T-cell (primary cell): ENCODE measurements at regions of chr3 and their contacts with region 1.

Region 1: GRCh38 chr3:71202848-71203533 is 380.5 kb downstream of the FOXP1 start:
- DNase-seq: no peak
- ATAC-seq: peak in 1 of 4 experiments; percentile 29
- H3K4me3 ChIP-seq: no peak overlapping the region
- H3K4me3 Mint-ChIP-seq: no peak overlapping the region
- H3K27ac ChIP-seq: no peak overlapping the region
- H3K27ac Mint-ChIP-seq: peak overlapping the region in 1 of 2 donors; percentile 9
- H3K4me1 ChIP-seq: peaks cover 5% of the 10 kb centered on the region in 2 experiments
- H3K4me1 Mint-ChIP-seq: peaks cover 63 to 71% (median 69%) of the 10 kb centered on the region in 3 donors
- H3K27me3 ChIP-seq: no peaks in the 10 kb centered on the region
- H3K27me3 Mint-ChIP-seq: no peaks in the 10 kb centered on the region

Region 2: DNA sequence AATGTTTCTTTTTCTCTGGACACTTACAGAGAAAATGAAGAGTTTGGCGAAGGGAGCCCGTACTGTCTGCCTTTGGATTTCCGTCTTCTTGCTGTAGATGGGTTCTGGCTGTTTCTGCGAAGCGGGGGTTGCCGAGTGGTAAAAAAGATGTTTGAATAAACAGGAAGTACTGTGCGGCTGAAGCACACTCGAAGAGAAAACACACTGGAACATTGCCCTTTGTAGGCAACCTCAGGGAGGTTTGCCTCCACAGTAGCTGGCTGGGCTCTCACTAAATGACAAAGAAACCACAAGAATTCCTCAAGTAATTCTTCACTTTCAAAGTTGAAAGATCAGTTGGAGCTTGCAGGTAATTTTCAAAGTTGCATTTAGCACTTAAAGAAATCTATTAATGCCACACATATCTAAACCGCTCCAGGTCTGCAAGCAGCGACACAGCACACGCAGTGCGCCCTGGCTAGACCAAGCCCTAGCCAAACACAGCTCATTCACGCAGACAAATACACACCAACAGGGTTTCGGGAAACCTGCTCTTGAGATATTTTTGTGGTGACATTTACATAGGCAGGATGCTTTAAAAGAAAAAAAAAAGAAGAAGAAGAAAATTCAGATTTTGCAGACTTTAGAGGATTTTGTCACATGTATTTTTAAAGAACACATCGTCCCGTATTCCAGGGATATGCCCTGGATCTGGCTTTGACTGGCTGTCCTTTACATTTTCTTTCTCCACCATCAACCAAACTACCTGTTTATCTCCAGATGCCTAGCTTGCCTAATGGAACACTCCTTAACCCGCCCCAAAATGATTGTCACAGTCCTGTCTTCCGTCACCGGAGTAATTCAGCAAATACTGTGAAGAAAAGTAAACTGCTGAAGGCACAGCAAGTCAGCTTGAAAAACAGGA is 72.3 kb before region 1 on chr3:
- CTCF ChIA-PET with region 1: no interaction called
- POLR2A ChIA-PET with region 1: interaction called in 1 of 2 experiments, 17 read pairs
- DNase-seq: peak; percentile 42 to 89 (median 79)
- ATAC-seq: peak; percentile 82 to 89 (median 85)
- H3K4me3 ChIP-seq: peak overlapping the region; percentile 56 to 73
- H3K4me3 Mint-ChIP-seq: peak overlapping the region; percentile 83 to 91 (median 91)
- H3K27ac ChIP-seq: peak overlapping the region; percentile 86
- H3K27ac Mint-ChIP-seq: peak overlapping the region; percentile 97 to 99
- H3K4me1 ChIP-seq: peaks cover 50 to 63% of the 10 kb centered on the region in 2 experiments
- H3K4me1 Mint-ChIP-seq: peaks cover 79 to 93% (median 80%) of the 10 kb centered on the region in 3 donors
- H3K27me3 ChIP-seq: no peaks in the 10 kb centered on the region
- H3K27me3 Mint-ChIP-seq: no peaks in the 10 kb centered on the region

Region 3: GRCh38 chr3:71258116-71258515 is 55.1 kb after region 1 on chr3:
- CTCF ChIA-PET with region 1: interaction called in 1 of 2 experiments, 11 read pairs
- POLR2A ChIA-PET with region 1: no interaction called
- DNase-seq: no peak
- ATAC-seq: peak in 3 of 4 experiments; percentile 9 to 43 (median 33)
- H3K4me3 ChIP-seq: no peak overlapping the region
- H3K4me3 Mint-ChIP-seq: peak overlapping the region in 1 of 3 donors; percentile 33
- H3K27ac ChIP-seq: no peak overlapping the region
- H3K27ac Mint-ChIP-seq: peak overlapping the region; percentile 7 to 13
- H3K4me1 ChIP-seq: peaks cover 0 to 12% of the 10 kb centered on the region in 2 experiments
- H3K4me1 Mint-ChIP-seq: peaks cover 65 to 76% (median 73%) of the 10 kb centered on the region in 3 donors
- H3K27me3 ChIP-seq: no peaks in the 10 kb centered on the region
- H3K27me3 Mint-ChIP-seq: no peaks in the 10 kb centered on the region

Region 4: GRCh38 chr3:72050048-72050689 is 847.2 kb after region 1 on chr3:
- CTCF ChIA-PET with region 1: no interaction called
- POLR2A ChIA-PET with region 1: no interaction called
- DNase-seq: no peak
- ATAC-seq: no peak
- H3K4me3 ChIP-seq: no peak overlapping the region
- H3K4me3 Mint-ChIP-seq: no peak overlapping the region
- H3K27ac ChIP-seq: no peak overlapping the region
- H3K27ac Mint-ChIP-seq: no peak overlapping the region
- H3K4me1 ChIP-seq: no peaks in the 10 kb centered on the region
- H3K4me1 Mint-ChIP-seq: no peaks in the 10 kb centered on the region
- H3K27me3 ChIP-seq: no peaks in the 10 kb centered on the region
- H3K27me3 Mint-ChIP-seq: peaks cover 0 to 2% of the 10 kb centered on the region in 2 donors